Dorsolateral prefrontal cortex (tissue), 120 donors: ENCODE measurements at regions of chr2 and their contacts with region 1.

Region 1: DNA sequence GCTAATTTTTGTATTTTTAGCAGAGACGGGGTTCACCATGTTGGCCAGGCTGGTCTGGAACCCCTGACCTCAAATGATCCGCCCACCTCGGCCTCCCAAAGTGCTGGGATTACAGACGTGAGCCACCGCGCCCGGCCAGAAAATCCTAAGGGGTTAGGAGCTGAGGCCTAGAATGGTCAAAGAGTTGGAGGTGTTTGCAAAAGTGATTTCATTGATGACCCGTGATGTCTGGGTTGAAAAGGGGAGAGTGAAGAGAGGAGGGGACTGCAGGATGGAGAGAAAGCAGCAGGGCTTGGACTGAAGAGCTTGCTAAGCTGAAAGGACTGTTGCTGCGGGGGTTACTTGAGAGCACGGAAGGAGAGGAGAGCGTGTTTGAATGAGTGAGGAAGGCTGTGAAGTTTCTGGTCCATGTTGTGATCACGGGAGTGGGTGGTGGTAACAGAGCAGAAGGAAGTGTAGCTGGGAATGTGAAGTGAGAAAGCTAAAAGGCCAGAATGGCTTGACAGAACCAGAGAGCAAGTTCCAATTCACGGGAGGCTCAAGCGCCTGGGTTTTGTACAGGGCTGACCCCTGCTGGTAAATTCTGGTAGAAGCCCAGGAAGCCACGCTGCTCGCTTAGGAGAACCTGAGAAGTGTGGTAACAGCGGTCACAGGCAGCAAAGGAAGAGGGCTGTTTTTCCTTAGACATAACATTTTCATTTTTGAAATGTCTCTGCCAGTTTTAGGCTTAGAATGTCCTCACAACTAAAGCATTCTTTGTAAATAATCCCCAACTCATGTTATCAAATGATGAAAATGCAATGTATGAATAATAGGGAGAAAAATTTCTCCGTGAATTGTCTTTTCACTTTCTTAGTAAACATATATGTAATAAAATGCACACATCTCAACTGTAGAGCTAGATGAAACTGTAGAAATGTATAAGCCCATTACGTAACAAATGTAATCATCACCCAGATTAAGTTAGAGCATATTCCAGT is 40.5 kb upstream of the ACTR2 start:
- DNase-seq: peak; percentile 59 to 84 (median 80)
- H3K4me3 ChIP-seq: peak overlapping the region in 16 of 59 donors; percentile 1 to 36 (median 14)
- H3K27ac ChIP-seq: peak overlapping the region in 7 of 59 donors; percentile 3 to 67 (median 46)
- H3K27me3 ChIP-seq: no peaks in the 10 kb centered on the region
- CTCF ChIP-seq: peak; percentile 49 to 93 (median 82)

Region 2: GRCh38 chr2:65056215-65057053 is 130.7 kb before region 1 on chr2 and contains the start of gene CEP68:
- intact Hi-C with region 1: loop called (anchors 5 to 10 kb)
- DNase-seq: peak; percentile 91 to 98 (median 97)
- H3K4me3 ChIP-seq: peak within 1 kb of the TSS; percentile 53 to 98 (median 89)
- H3K27ac ChIP-seq: peak within 1 kb of the TSS; percentile 37 to 97 (median 88)
- H3K27me3 ChIP-seq: no peaks in the 10 kb centered on the region
- CTCF ChIP-seq: peak in 19 of 56 donors; percentile 1 to 52 (median 26)
- total RNA-seq, gene CEP68: 23.2 to 57.6 (median 40.4) TPM

Region 3: DNA sequence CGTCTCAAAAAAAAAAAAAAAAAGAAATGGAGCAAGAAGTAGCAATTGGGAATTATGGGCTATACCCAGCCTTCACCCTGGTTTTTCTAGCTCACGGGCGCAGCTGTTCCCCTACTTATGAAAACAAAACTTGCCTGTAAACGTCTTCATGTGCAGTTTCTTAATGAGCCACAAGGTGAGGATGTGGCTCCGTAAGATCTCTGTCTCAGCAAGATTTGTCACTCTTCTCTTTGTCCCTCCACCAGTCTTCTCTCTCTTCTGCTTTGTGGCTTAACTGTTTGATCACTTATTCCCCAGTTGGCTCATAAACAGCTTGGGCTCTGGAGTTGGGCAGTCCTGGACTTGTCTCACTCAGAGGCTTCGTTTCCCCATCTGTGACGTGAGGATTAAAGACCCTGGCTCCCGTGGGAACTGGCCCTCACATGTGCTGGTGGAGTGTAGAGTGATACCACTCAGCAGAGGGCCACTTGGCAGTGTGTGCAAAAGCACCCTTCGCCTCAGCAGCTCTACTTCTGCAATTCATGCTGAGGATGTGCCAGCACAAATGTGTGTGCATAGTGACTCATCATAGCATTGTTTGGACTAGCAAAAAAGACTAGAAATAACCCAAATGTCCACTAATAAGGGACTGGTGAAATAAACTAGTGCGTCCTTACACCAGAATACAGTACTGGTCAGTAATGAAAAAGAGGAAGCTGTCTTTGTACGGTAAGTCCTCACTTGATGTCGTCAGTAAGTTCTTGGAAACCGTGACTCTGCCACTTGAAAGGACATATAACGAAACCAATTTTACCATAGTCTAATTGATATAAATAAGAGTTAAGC is 122.2 kb before region 1 on chr2:
- intact Hi-C with region 1: loop called in 1 of 2 experiments (anchors 10 kb)
- DNase-seq: peak in 6 of 10 donors; percentile 59 to 78 (median 68)
- H3K4me3 ChIP-seq: peak overlapping the region in 46 of 59 donors; percentile 1 to 54 (median 20)
- H3K27ac ChIP-seq: peak overlapping the region; percentile 13 to 88 (median 75)
- H3K27me3 ChIP-seq: no peaks in the 10 kb centered on the region
- CTCF ChIP-seq: peak; percentile 50 to 79 (median 68)

Region 4: GRCh38 chr2:65175917-65176527 is 11.1 kb before region 1 on chr2:
- intact Hi-C with region 1: no loop called
- DNase-seq: no peak
- H3K4me3 ChIP-seq: no peak overlapping the region
- H3K27ac ChIP-seq: no peak overlapping the region
- H3K27me3 ChIP-seq: no peaks in the 10 kb centered on the region
- CTCF ChIP-seq: no peak

Region 5: DNA sequence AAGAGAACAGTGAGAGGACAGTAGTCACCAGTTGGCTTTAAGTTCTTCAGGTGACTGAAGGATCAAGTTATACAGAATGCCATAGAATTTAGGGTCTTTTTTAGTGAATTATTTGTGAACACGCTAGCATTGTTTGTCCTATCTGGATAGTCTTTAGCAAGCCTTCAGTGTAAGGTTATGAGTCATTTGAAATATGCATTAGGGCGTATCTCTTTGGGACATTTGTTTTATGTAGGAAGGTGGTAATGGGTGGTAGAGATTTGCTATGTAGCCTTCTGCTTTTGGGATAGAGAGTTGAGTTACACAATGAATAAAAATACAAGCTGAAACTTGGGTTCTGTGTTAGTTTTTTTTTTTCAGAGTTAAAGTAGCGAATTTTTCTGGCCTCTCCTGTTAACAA is 53.5 kb after region 1 on chr2:
- intact Hi-C with region 1: no loop called
- DNase-seq: no peak
- H3K4me3 ChIP-seq: no peak overlapping the region
- H3K27ac ChIP-seq: no peak overlapping the region
- H3K27me3 ChIP-seq: no peaks in the 10 kb centered on the region
- CTCF ChIP-seq: no peak